ENCODE measurements at regions of chr7 and their contacts with region 1.

Region 1: DNA sequence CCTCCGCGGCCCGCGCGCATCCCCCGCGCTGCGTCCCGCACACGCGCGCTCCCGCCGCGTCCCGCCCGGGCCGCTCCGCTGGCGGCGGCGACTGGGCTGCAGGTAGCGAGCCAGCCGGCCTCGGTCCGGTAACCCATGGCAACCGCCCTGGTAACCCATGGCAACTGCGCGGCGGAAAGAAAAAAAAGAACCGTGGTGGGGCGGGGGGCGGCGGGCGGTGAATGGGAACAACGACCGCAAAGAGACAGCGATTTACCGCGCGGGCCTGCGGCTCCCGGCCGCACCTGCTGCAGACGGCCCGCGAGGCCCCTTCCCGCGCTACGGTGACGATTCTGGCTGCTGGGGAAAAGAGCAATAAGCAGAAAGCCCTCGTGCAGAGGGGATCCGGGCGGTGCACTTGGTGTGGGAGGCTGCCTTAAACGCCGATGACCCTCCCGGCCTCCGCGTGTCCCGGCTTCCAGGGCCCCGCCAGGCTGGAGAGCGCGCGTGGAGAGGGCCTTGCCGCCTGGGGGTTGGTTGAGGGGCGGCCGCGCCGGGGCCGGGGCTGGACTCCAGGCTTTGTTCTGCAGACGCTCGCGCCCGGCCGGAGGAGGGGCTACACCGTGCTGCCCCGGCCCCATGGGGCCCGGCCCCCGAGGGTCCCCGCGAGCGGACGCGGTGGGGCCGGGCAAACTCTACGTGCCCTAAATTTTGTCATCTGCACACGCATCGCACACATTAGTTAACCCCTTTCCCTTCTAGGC is 84.7 kb downstream of the SNX10 start:
- DNase-seq: no peak
- H3K4me3 ChIP-seq: peak overlapping the region; percentile 31 to 63 (median 48)
- H3K27ac ChIP-seq: peak overlapping the region; percentile 35 to 73 (median 43)
- H3K4me1 ChIP-seq: peaks cover 9 to 38% (median 10%) of the 10 kb centered on the region in 3 donors
- H3K27me3 ChIP-seq: peaks cover 0 to 100% (median 19%) of the 10 kb centered on the region in 4 donors
- CTCF ChIP-seq: no peak
- POLR2A ChIP-seq: no peak

Region 2: GRCh38 chr7:26224359-26224758 is 152.0 kb before region 1 on chr7:
- intact Hi-C with region 1: no loop called
- DNase-seq: no peak
- H3K4me3 ChIP-seq: no peak overlapping the region
- H3K27ac ChIP-seq: no peak overlapping the region
- H3K4me1 ChIP-seq: no peaks in the 10 kb centered on the region
- H3K27me3 ChIP-seq: peaks cover 0 to 17% (median 0%) of the 10 kb centered on the region in 4 donors
- CTCF ChIP-seq: no peak
- POLR2A ChIP-seq: no peak

Region 3: GRCh38 chr7:26667500-26668133 is 291.3 kb after region 1 on chr7:
- intact Hi-C with region 1: loop called (anchors 10 kb)
- DNase-seq: no peak
- H3K4me3 ChIP-seq: no peak overlapping the region
- H3K27ac ChIP-seq: no peak overlapping the region
- H3K4me1 ChIP-seq: peaks cover 0 to 10% (median 0%) of the 10 kb centered on the region in 3 donors
- H3K27me3 ChIP-seq: peaks cover 0 to 10% (median 0%) of the 10 kb centered on the region in 4 donors
- CTCF ChIP-seq: peak; percentile 32 to 88 (median 71)
- POLR2A ChIP-seq: no peak

Region 4: GRCh38 chr7:26843705-26844104 is 467.4 kb after region 1 on chr7:
- intact Hi-C with region 1: loop called (anchors 10 kb)
- DNase-seq: no peak
- H3K4me3 ChIP-seq: no peak overlapping the region
- H3K27ac ChIP-seq: no peak overlapping the region
- H3K4me1 ChIP-seq: no peaks in the 10 kb centered on the region
- H3K27me3 ChIP-seq: peaks cover 0 to 4% (median 0%) of the 10 kb centered on the region in 4 donors
- CTCF ChIP-seq: peak in 1 of 6 experiments; percentile 26
- POLR2A ChIP-seq: no peak

Region 5: DNA sequence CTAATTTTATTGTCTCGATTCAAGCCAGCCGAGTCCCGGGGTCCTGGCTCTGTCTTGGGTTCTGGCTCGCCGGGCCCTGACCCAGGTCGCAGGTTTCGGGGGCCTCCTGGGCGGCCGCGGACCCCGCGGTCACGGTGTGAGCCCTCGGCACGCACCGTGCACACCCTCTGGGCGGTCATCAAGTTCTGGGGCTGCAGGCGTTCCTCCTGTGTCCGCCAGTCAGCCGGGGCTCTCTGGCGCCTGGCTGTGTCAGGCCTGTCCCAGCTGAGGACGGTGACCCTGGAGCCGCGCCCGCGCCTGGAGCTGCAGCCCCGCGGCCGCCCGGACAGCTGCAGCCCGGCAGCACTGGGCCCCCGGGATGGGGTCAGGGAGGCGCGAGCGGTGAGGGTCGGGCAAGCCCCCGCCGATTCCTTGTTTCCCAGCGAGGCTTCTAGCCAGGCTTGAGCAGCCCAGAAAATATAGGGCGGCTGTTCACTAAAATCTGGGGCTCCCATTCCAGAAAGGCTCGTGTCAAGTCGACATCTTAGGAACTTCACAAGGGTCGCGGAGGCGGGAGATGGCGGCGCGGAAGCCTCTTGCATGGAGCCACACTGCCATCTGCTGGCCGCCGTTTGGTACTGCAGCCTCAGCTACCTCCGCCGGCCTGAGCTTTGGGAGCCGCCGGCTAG is 784.3 kb after region 1 on chr7:
- intact Hi-C with region 1: loop called (anchors 5 kb)
- DNase-seq: peak; percentile 62
- H3K4me3 ChIP-seq: peak overlapping the region; percentile 43 to 71 (median 56)
- H3K27ac ChIP-seq: peak overlapping the region in 2 of 4 donors; percentile 44 to 47
- H3K4me1 ChIP-seq: peaks cover 30 to 71% (median 42%) of the 10 kb centered on the region in 3 donors
- H3K27me3 ChIP-seq: peaks cover 23 to 99% (median 65%) of the 10 kb centered on the region in 4 donors
- CTCF ChIP-seq: peak; percentile 99 to 100 (median 99)
- POLR2A ChIP-seq: no peak